Calu3 (cell line): ENCODE measurements at regions of chr13 and their contacts with region 1.

Region 1: GRCh38 chr13:45807520-45808099 is 43.9 kb downstream of the SIAH3 start:
- DNase-seq: peak; percentile 50
- H3K4me3 Mint-ChIP-seq: no peak overlapping the region
- H3K27ac Mint-ChIP-seq: no peak overlapping the region
- H3K4me1 Mint-ChIP-seq: no peaks in the 10 kb centered on the region
- H3K27me3 Mint-ChIP-seq: peaks cover 13% of the 10 kb centered on the region
- CTCF ChIP-seq: peak; percentile 45

Region 2: GRCh38 chr13:45781553-45782326 is 25.9 kb before region 1 on chr13:
- CTCF ChIA-PET with region 1: no interaction called
- intact Hi-C with region 1: no loop called
- DNase-seq: peak; percentile 5
- H3K4me3 Mint-ChIP-seq: no peak overlapping the region
- H3K27ac Mint-ChIP-seq: no peak overlapping the region
- H3K4me1 Mint-ChIP-seq: no peaks in the 10 kb centered on the region
- H3K27me3 Mint-ChIP-seq: peaks cover 57% of the 10 kb centered on the region
- CTCF ChIP-seq: no peak

Region 3: GRCh38 chr13:45879670-45880069 is 72.1 kb after region 1 on chr13:
- CTCF ChIA-PET with region 1: interaction called, 8 read pairs
- intact Hi-C with region 1: loop called (anchors 5 kb)
- DNase-seq: peak; percentile 43
- H3K4me3 Mint-ChIP-seq: no peak overlapping the region
- H3K27ac Mint-ChIP-seq: no peak overlapping the region
- H3K4me1 Mint-ChIP-seq: peaks cover 15% of the 10 kb centered on the region
- H3K27me3 Mint-ChIP-seq: peaks cover 11% of the 10 kb centered on the region
- CTCF ChIP-seq: peak; percentile 12

Region 4: DNA sequence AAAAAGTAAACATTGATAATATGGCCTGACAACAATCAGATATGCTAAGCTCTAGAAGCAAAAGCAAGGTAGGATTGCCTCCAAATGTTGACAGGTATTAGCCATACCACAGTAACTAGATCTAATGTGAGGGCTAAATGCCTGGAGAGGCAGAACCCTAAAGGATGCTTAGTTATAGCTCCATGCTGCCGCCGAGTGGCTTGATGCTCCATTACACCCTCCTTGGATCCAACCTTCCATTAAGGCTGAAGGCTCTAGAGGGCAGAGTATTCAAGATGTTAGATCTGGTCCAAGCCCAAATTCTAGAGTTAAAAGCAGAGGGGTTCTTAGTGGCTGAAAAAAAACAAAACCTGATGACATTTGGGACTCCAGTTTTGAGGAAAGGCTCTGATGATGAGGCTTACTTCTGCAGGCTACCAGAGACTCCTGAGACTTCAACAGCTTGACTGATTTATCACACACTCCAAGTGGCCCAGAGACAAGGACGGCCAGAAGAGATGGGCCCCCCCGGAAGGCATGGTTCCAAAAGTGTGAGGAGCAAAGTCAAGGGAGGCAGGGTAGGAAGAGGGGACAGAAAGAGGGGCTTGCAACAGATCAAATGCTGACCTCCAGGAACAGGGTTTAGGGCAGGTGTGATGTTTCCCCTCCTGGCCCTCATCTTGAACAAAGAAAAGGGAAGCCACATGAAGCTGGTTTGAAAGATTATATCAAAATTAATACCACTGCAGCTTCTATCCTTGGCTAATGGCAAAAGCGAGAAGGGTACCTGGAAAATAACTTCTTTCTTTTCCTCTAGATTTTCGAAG is 319.1 kb after region 1 on chr13:
- CTCF ChIA-PET with region 1: interaction called, 14 read pairs
- intact Hi-C with region 1: loop called (anchors 1 kb)
- DNase-seq: peak; percentile 61
- H3K4me3 Mint-ChIP-seq: no peak overlapping the region
- H3K27ac Mint-ChIP-seq: no peak overlapping the region
- H3K4me1 Mint-ChIP-seq: peaks cover 5% of the 10 kb centered on the region
- H3K27me3 Mint-ChIP-seq: no peaks in the 10 kb centered on the region
- CTCF ChIP-seq: peak; percentile 70

Region 5: DNA sequence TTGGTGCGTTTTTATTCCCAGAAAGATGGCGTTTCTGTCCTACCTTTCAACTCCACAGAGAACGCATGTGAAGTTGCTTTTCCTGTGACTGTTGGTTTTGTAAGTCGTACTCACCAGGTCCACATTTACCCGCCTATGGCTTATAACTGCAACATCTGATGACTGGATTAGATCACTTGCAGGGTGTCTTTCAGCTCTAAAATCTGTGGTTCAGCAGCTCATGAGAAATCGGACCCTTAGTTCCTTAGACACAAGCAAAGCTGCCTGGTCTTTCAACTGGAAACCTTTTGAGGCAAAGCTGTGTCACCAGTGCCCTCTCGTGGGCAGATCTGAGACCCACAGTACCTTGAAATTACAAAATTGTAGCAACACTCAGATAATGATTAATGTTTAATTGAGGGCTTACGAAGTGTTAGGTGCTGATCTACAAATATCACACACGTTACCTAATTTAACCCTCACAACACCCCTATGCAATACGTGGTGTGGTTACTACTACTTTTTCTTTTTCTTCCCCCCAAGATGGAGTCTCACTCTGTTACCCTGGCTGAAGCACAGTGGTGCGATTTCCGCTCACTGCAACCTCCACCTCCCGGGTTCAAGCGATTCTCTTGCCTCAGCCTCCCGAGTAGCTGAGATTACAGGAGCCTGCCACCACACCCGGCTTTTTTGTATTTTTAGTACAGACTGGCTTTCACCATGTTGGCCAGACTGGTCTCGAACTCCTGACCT is 514.0 kb after region 1 on chr13:
- CTCF ChIA-PET with region 1: interaction called, 5 read pairs
- intact Hi-C with region 1: loop called (anchors 1 kb)
- DNase-seq: peak; percentile 49
- H3K4me3 Mint-ChIP-seq: no peak overlapping the region
- H3K27ac Mint-ChIP-seq: no peak overlapping the region
- H3K4me1 Mint-ChIP-seq: peaks cover 16% of the 10 kb centered on the region
- H3K27me3 Mint-ChIP-seq: peaks cover 8% of the 10 kb centered on the region
- CTCF ChIP-seq: peak; percentile 50